ENCODE measurements at regions of chr13 and their contacts with region 1.

Region 1: GRCh38 chr13:48126944-48127830 is 32.3 kb upstream of the MED4 start:
- DNase-seq: no peak
- H3K4me3 ChIP-seq: no peak overlapping the region
- H3K27ac ChIP-seq: peak overlapping the region; percentile 86
- H3K4me1 ChIP-seq: peaks cover 51% of the 10 kb centered on the region
- H3K27me3 ChIP-seq: no peaks in the 10 kb centered on the region
- CTCF ChIP-seq: peak; percentile 30 to 84 (median 65)
- POLR2A ChIP-seq: no peak

Region 2: GRCh38 chr13:48165063-48165462 is 37.9 kb after region 1 on chr13:
- intact Hi-C with region 1: no loop called
- DNase-seq: no peak
- H3K4me3 ChIP-seq: no peak overlapping the region
- H3K27ac ChIP-seq: no peak overlapping the region
- H3K4me1 ChIP-seq: peaks cover 23% of the 10 kb centered on the region
- H3K27me3 ChIP-seq: no peaks in the 10 kb centered on the region
- CTCF ChIP-seq: no peak
- POLR2A ChIP-seq: no peak

Region 3: DNA sequence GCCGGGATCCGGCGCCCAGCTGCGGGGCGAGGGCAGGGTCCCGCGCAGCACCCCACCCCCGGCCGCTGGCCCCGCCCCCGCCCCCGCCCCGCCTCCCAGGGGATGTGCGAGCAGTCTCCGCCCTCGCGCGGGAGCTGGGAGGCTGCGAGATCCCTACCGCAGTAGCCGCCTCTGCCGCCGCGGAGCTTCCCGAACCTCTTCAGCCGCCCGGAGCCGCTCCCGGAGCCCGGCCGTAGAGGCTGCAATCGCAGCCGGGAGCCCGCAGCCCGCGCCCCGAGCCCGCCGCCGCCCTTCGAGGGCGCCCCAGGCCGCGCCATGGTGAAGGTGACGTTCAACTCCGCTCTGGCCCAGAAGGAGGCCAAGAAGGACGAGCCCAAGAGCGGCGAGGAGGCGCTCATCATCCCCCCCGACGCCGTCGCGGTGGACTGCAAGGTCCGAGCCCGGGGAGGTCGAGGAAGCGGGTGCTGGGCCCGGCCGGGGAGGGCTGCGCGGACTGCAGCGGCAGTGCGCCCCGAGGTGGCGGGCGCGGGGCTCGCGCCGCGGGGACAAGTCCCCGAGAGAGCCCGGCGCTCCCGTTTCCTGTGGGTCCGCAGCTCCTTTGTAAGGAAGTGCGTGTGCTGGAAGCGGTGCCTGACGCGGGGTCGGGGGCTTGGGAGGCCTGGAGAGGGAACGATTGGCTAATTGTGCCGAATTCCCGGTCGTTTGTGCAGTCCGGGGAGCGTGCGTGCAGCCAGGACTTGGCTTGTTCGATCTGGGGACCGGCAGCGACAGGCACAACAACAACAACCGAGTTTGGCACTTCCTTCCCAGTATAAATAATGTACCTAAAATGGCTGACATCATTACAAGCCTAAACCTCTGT is 106.1 kb after region 1 on chr13 and contains the start of gene ITM2B:
- intact Hi-C with region 1: loop called (anchors 5 kb)
- DNase-seq: no peak
- H3K4me3 ChIP-seq: peak within 1 kb of the TSS; percentile 76 to 98
- H3K27ac ChIP-seq: peak within 1 kb of the TSS; percentile 99
- H3K4me1 ChIP-seq: peaks cover 58% of the 10 kb centered on the region
- H3K27me3 ChIP-seq: no peaks in the 10 kb centered on the region
- CTCF ChIP-seq: peak in 1 of 3 experiments; percentile 32
- POLR2A ChIP-seq: peak in 1 of 2 donors; percentile 82
- total RNA-seq, gene ITM2B: 475 TPM

Region 4: GRCh38 chr13:49113526-49114286 is 986.5 kb after region 1 on chr13:
- intact Hi-C with region 1: no loop called
- DNase-seq: no peak
- H3K4me3 ChIP-seq: no peak overlapping the region
- H3K27ac ChIP-seq: no peak overlapping the region
- H3K4me1 ChIP-seq: peaks cover 24% of the 10 kb centered on the region
- H3K27me3 ChIP-seq: no peaks in the 10 kb centered on the region
- CTCF ChIP-seq: no peak
- POLR2A ChIP-seq: no peak

Measured in vagina (tissue), 2 donors.